ENCODE measurements at regions of chr17 and their contacts with region 1.

Region 1: DNA sequence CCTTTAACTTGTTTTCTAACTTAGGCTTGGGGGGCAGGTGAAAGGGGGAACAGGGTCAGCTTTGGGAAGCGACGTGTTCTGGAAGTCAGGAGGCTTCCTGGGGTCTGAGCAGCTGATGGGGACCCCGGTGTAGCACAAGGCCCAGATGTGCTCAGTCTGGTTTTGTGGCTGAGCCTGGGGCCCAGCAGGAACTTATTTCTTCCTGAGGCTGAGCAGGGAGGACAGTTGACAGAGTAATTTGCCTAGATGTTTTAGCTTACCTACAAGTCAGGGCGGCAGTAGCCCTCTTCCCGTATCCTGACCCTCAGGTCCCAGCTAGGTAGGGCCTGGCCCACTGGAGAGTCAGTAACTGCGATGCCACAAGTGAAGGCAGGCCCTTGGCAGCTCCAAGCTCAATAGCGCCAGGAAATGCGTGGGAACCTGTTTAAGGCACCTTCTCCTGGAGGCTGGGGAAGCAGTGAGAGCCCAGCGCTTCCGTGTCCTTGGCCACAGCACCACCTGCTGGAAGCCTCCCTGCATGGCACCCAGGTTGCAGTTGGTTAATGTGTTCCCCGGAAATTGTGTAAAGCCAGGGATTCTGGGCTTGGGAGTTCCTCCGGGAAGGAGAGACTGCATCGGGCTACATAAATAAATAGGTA is 5.2 kb downstream of the CCR7 start:
- DNase-seq: peak; percentile 72
- ATAC-seq: peak; percentile 5
- H3K4me3 ChIP-seq: peak overlapping the region; percentile 70
- H3K27ac ChIP-seq: peak overlapping the region; percentile 98
- H3K4me1 ChIP-seq: peaks cover 33% of the 10 kb centered on the region
- H3K27me3 ChIP-seq: no peaks in the 10 kb centered on the region
- CTCF ChIP-seq: peak; percentile 91 to 97 (median 94)
- EP300 ChIP-seq: no peak
- POLR2A ChIP-seq: no peak; the same call in 1 of the 2 replicates
- RAD21 ChIP-seq: peak; percentile 90

Region 2: GRCh38 chr17:40443583-40444327 is 116.3 kb before region 1 on chr17:
- CTCF ChIA-PET with region 1: interaction called, 11 read pairs
- POLR2A ChIA-PET with region 1: no interaction called
- RAD21 ChIA-PET with region 1: interaction called, 11 read pairs
- SMC1A ChIA-PET with region 1: interaction called, 4 read pairs
- in situ Hi-C with region 1: no loop called
- intact Hi-C with region 1: no loop called
- DNase-seq: no peak
- ATAC-seq: peak; percentile 84
- H3K4me3 ChIP-seq: peak overlapping the region; percentile 61
- H3K27ac ChIP-seq: no peak overlapping the region
- H3K4me1 ChIP-seq: peaks cover 19% of the 10 kb centered on the region
- H3K27me3 ChIP-seq: peaks cover 0 to 16% of the 10 kb centered on the region in 2 experiments; a peak in 1 of 4 replicates
- CTCF ChIP-seq: peak; percentile 46 to 72 (median 71)
- EP300 ChIP-seq: no peak
- POLR2A ChIP-seq: no peak
- RAD21 ChIP-seq: peak; percentile 33; the same call in 1 of the 2 replicates

Region 3: GRCh38 chr17:40542558-40543411 is 17.3 kb before region 1 on chr17:
- CTCF ChIA-PET with region 1: interaction called, 318 read pairs
- POLR2A ChIA-PET with region 1: interaction called, 50 read pairs
- RAD21 ChIA-PET with region 1: interaction called, 514 read pairs
- SMC1A ChIA-PET with region 1: interaction called, 430 read pairs
- in situ Hi-C with region 1: no loop called
- intact Hi-C with region 1: loop called (anchors 2 kb)
- DNase-seq: no peak
- ATAC-seq: peak; percentile 67
- H3K4me3 ChIP-seq: no peak overlapping the region
- H3K27ac ChIP-seq: peak overlapping the region; percentile 30
- H3K4me1 ChIP-seq: peaks cover 56% of the 10 kb centered on the region
- H3K27me3 ChIP-seq: no peaks in the 10 kb centered on the region; a peak in 1 of 4 replicates
- CTCF ChIP-seq: no peak
- EP300 ChIP-seq: peak; percentile 33 to 73; a peak in 3 of 4 replicates
- POLR2A ChIP-seq: peak; percentile 40; the same call in 1 of the 2 replicates
- RAD21 ChIP-seq: no peak

Region 4: GRCh38 chr17:40582328-40582901 is 22.3 kb after region 1 on chr17:
- CTCF ChIA-PET with region 1: interaction called, 40 read pairs
- POLR2A ChIA-PET with region 1: interaction called, 43 read pairs
- RAD21 ChIA-PET with region 1: interaction called, 97 read pairs
- SMC1A ChIA-PET with region 1: interaction called, 112 read pairs
- in situ Hi-C with region 1: no loop called
- intact Hi-C with region 1: loop called (anchors 1 kb)
- DNase-seq: peak; percentile 99
- ATAC-seq: peak; percentile 87
- H3K4me3 ChIP-seq: no peak overlapping the region
- H3K27ac ChIP-seq: no peak overlapping the region
- H3K4me1 ChIP-seq: peaks cover 28% of the 10 kb centered on the region
- H3K27me3 ChIP-seq: peaks cover 0 to 4% of the 10 kb centered on the region in 2 experiments; a peak in 1 of 4 replicates
- CTCF ChIP-seq: no peak
- EP300 ChIP-seq: peak; percentile 59 to 60; a peak in 2 of 4 replicates
- POLR2A ChIP-seq: no peak
- RAD21 ChIP-seq: 0 out of 2 replicates have a peak, but pooled peaks have one; percentile 4

Region 5: GRCh38 chr17:40726919-40727318 is 166.8 kb after region 1 on chr17:
- CTCF ChIA-PET with region 1: no interaction called
- POLR2A ChIA-PET with region 1: no interaction called
- RAD21 ChIA-PET with region 1: no interaction called
- SMC1A ChIA-PET with region 1: no interaction called
- in situ Hi-C with region 1: no loop called
- intact Hi-C with region 1: loop called (anchors 10 kb)
- DNase-seq: no peak
- ATAC-seq: peak; percentile 49
- H3K4me3 ChIP-seq: no peak overlapping the region
- H3K27ac ChIP-seq: no peak overlapping the region
- H3K4me1 ChIP-seq: peaks cover 3% of the 10 kb centered on the region; the same call in 1 of the 2 replicates
- H3K27me3 ChIP-seq: no peaks in the 10 kb centered on the region; a peak in 1 of 4 replicates
- CTCF ChIP-seq: peak in 1 of 3 experiments; percentile 22; a peak in 2 of 6 replicates
- EP300 ChIP-seq: no peak
- POLR2A ChIP-seq: no peak
- RAD21 ChIP-seq: no peak